Activated naive CD4-positive, alpha-beta T cell treated with anti-CD3 and anti-CD28 coated beads for 36 hours (primary cell): ENCODE measurements at regions of chr11 and their contacts with region 1.

Region 1: GRCh38 chr11:18115360-18116127 is 9.7 kb upstream of the SAAL1 start:
- DNase-seq: peak; percentile 73
- H3K4me3 Mint-ChIP-seq: no peak overlapping the region
- H3K27ac Mint-ChIP-seq: no peak overlapping the region
- H3K4me1 Mint-ChIP-seq: no peaks in the 10 kb centered on the region
- H3K27me3 Mint-ChIP-seq: peaks cover 14% of the 10 kb centered on the region

Region 2: GRCh38 chr11:17703951-17704350 is 411.6 kb before region 1 on chr11:
- CTCF ChIA-PET with region 1: no interaction called
- intact Hi-C with region 1: no loop called
- DNase-seq: no peak
- H3K4me3 Mint-ChIP-seq: no peak overlapping the region
- H3K27ac Mint-ChIP-seq: no peak overlapping the region
- H3K4me1 Mint-ChIP-seq: no peaks in the 10 kb centered on the region
- H3K27me3 Mint-ChIP-seq: peaks cover 1% of the 10 kb centered on the region

Region 3: GRCh38 chr11:17930544-17931125 is 184.9 kb before region 1 on chr11:
- CTCF ChIA-PET with region 1: no interaction called
- intact Hi-C with region 1: no loop called
- DNase-seq: no peak
- H3K4me3 Mint-ChIP-seq: no peak overlapping the region
- H3K27ac Mint-ChIP-seq: no peak overlapping the region
- H3K4me1 Mint-ChIP-seq: no peaks in the 10 kb centered on the region
- H3K27me3 Mint-ChIP-seq: no peaks in the 10 kb centered on the region

Region 4: GRCh38 chr11:18036456-18036855 is 79.1 kb before region 1 on chr11:
- CTCF ChIA-PET with region 1: no interaction called
- intact Hi-C with region 1: no loop called
- DNase-seq: no peak
- H3K4me3 Mint-ChIP-seq: no peak overlapping the region
- H3K27ac Mint-ChIP-seq: no peak overlapping the region
- H3K4me1 Mint-ChIP-seq: no peaks in the 10 kb centered on the region
- H3K27me3 Mint-ChIP-seq: no peaks in the 10 kb centered on the region

Region 5: DNA sequence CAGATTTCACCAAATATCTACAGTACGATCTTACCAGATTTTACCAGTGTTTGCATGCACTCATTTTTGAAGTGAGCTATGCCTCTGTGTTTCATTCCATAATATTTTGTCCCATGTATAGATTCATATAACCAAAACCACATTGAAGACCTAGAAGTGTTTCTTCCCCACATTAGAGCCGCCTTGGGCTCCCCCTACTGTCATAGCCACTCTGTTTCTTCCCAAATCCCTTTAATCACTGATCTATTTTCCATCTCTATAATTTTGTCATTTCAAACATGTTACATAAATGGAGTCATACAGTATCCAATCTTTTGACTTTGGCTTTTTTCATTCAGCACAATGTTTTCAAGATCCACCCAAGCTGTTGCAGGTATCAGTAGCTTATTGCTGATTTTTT is 29.5 kb after region 1 on chr11:
- CTCF ChIA-PET with region 1: interaction called, 3 read pairs
- intact Hi-C with region 1: loop called (anchors 1 kb)
- DNase-seq: no peak
- H3K4me3 Mint-ChIP-seq: no peak overlapping the region
- H3K27ac Mint-ChIP-seq: no peak overlapping the region
- H3K4me1 Mint-ChIP-seq: peaks cover 6% of the 10 kb centered on the region
- H3K27me3 Mint-ChIP-seq: peaks cover 23% of the 10 kb centered on the region

Region 6: DNA sequence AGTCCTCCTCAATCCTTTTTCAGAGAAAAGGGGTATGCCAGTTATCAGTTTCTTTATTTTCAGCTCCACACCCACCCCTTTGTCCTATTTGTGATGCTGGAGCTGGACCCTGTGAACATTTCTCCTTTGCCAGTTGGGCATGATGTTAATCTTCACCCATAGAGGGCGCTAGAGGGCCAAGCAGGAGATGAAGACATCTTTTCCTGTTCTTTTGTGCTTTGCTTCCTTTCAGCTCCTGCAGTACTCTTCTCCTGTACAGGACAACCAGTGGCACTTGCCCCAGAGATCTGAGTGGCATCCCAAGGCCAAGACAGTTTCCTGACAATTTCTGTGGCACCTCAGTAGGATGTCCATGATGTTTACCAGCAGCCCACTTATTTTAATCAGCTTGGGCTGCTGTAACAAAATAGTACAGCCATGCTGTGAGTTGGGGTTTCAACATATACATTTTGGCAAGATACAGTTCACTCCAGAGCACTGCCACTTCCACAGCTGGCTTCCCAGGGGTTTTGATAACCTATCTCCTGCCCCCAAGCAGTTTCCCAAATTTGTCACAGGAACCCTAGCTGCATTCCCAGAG is 128.3 kb after region 1 on chr11:
- CTCF ChIA-PET with region 1: interaction called, 5 read pairs
- intact Hi-C with region 1: loop called (anchors 10 kb)
- DNase-seq: peak; percentile 81
- H3K4me3 Mint-ChIP-seq: no peak overlapping the region
- H3K27ac Mint-ChIP-seq: no peak overlapping the region
- H3K4me1 Mint-ChIP-seq: peaks cover 6% of the 10 kb centered on the region
- H3K27me3 Mint-ChIP-seq: peaks cover 4% of the 10 kb centered on the region

Region 7: GRCh38 chr11:18347471-18348125 is 232.1 kb after region 1 on chr11:
- CTCF ChIA-PET with region 1: no interaction called
- intact Hi-C with region 1: no loop called
- DNase-seq: no peak
- H3K4me3 Mint-ChIP-seq: no peak overlapping the region
- H3K27ac Mint-ChIP-seq: peak overlapping the region; percentile 61
- H3K4me1 Mint-ChIP-seq: peaks cover 4% of the 10 kb centered on the region
- H3K27me3 Mint-ChIP-seq: no peaks in the 10 kb centered on the region

Region 8: GRCh38 chr11:18540207-18541009 is 424.9 kb after region 1 on chr11:
- CTCF ChIA-PET with region 1: no interaction called
- intact Hi-C with region 1: loop called (anchors 1 kb)
- DNase-seq: no peak
- H3K4me3 Mint-ChIP-seq: no peak overlapping the region
- H3K27ac Mint-ChIP-seq: no peak overlapping the region
- H3K4me1 Mint-ChIP-seq: peaks cover 6% of the 10 kb centered on the region
- H3K27me3 Mint-ChIP-seq: no peaks in the 10 kb centered on the region

Region 9: GRCh38 chr11:18731949-18732821 is 616.6 kb after region 1 on chr11:
- CTCF ChIA-PET with region 1: interaction called, 12 read pairs
- intact Hi-C with region 1: loop called (anchors 1 kb)
- DNase-seq: peak; percentile 79
- H3K4me3 Mint-ChIP-seq: no peak overlapping the region
- H3K27ac Mint-ChIP-seq: no peak overlapping the region
- H3K4me1 Mint-ChIP-seq: peaks cover 3% of the 10 kb centered on the region
- H3K27me3 Mint-ChIP-seq: no peaks in the 10 kb centered on the region

Region 10: DNA sequence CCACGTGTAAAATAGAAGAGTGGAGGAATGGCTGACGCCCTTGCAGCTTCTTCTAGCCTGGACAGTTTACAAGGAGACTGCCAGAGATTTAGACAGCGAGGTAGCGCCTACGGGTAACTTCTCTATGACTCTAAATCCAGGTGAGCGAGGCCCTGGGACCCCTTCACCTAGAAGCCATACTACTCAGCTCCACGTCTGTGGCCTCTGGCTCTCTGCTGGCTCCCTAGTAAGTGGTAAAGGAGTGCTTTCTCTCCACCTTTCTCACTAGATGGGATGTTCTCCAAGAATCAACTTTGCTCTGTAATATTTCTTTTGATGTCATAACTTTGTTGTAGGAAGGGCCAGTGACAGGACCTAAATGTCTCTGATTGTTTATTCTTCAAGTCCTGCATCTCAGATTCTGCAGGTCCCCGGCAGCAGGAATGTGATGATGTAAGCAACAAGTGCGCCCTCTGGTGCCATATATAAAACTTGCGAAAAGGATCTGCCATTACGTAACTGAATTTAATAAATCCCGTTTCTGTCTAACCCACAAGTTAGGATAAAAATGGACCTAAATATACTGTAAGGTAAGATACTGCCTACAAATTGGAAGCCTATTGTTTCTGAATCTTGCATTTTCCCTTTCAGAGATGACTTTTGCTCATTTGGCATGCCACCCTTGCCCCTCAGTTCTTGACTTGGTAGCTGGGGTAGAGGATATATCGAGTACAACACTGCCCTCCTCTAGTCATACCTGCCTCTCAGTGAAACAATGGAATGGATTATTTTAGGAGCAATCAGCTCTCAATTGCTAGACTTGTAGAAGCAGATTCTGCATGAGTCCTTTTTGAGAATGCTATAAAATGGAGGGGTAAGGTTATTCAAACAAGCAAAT is 687.1 kb after region 1 on chr11:
- CTCF ChIA-PET with region 1: interaction called, 6 read pairs
- intact Hi-C with region 1: loop called (anchors 2 kb)
- DNase-seq: peak; percentile 67
- H3K4me3 Mint-ChIP-seq: no peak overlapping the region
- H3K27ac Mint-ChIP-seq: no peak overlapping the region
- H3K4me1 Mint-ChIP-seq: no peaks in the 10 kb centered on the region
- H3K27me3 Mint-ChIP-seq: peaks cover 3% of the 10 kb centered on the region